ENCODE measurements at regions of chr2 and their contacts with region 1.

Region 1: DNA sequence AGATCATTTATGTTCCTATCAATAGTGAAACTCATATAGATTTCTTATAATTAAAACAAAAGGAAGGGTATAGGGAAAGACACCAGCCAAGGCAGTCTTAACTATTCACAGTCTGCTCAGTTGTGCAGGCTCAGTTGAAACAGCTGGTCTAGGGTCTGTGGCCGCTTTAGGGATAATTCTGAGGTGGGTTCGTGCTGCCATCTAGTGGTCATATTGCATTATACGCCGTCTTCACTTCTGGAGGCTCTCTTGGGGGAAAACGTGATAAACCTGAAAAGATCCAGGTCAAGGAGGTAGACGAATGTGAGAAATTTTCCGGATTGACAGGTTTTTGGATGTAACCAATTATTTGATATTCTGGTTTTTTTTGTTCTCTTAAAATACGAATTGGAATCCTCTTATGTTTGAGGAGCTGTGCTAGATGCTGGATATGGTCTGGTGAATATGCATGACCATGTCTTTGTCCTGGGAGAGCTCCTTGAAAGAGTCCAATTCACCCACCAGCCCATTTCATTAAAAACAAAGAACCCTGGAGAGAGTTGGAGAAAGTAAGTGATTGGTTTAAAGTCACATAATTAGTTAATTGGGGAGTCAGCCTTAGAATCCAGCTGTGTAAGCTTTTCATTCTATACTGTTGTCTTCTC is 492.4 kb downstream of the PLCL1 start:
- DNase-seq: peak; percentile 48 to 57 (median 55)
- H3K4me3 ChIP-seq: no peak overlapping the region
- H3K4me3 Mint-ChIP-seq: no peak overlapping the region
- H3K27ac ChIP-seq: no peak overlapping the region
- H3K27ac Mint-ChIP-seq: no peak overlapping the region
- H3K4me1 ChIP-seq: no peaks in the 10 kb centered on the region
- H3K4me1 Mint-ChIP-seq: peaks cover 0 to 2% (median under 1%) of the 10 kb centered on the region in 4 donors
- H3K27me3 ChIP-seq: peaks cover 3% of the 10 kb centered on the region
- H3K27me3 Mint-ChIP-seq: peaks cover 7 to 19% of the 10 kb centered on the region in 2 donors

Region 2: DNA sequence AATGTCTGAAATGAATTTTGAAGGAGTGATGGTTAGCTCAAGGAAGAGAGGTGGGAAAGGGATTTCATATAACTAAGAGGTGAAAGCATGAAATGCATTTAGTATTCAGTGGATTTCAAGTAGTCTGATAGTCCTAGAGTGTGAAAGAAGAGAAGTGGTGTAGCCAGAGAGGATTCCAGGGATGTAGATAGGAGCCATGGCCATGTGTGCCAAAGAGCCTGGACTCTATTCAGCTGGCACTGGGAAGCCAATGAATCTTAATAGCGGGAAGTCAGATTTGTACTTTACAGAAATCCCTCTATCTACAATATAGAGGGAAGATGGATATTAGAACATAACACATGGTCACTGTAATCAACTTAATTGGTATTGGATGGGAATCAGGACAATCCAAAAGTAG is 503.3 kb before region 1 on chr2:
- CTCF ChIA-PET with region 1: interaction called, 30 read pairs
- POLR2A ChIA-PET with region 1: no interaction called
- intact Hi-C with region 1: no loop called
- DNase-seq: no peak
- H3K4me3 ChIP-seq: no peak overlapping the region
- H3K4me3 Mint-ChIP-seq: no peak overlapping the region
- H3K27ac ChIP-seq: no peak overlapping the region
- H3K27ac Mint-ChIP-seq: no peak overlapping the region
- H3K4me1 ChIP-seq: no peaks in the 10 kb centered on the region
- H3K4me1 Mint-ChIP-seq: no peaks in the 10 kb centered on the region
- H3K27me3 ChIP-seq: no peaks in the 10 kb centered on the region
- H3K27me3 Mint-ChIP-seq: peaks cover 19 to 26% of the 10 kb centered on the region in 2 donors

Region 3: GRCh38 chr2:197804049-197804757 is 492.6 kb before region 1 on chr2 and contains the start of gene PLCL1:
- CTCF ChIA-PET with region 1: interaction called, 30 read pairs
- POLR2A ChIA-PET with region 1: interaction called, 5 read pairs
- intact Hi-C with region 1: loop called (anchors 1 kb)
- DNase-seq: peak; percentile 89 to 92 (median 90)
- H3K4me3 ChIP-seq: peak within 1 kb of the TSS; percentile 60 to 82
- H3K4me3 Mint-ChIP-seq: peak within 1 kb of the TSS; percentile 92 to 97 (median 96)
- H3K27ac ChIP-seq: peak within 1 kb of the TSS; percentile 61
- H3K27ac Mint-ChIP-seq: peak within 1 kb of the TSS; percentile 77 to 94 (median 89)
- H3K4me1 ChIP-seq: peaks cover 50% of the 10 kb centered on the region
- H3K4me1 Mint-ChIP-seq: peaks cover 35 to 54% (median 45%) of the 10 kb centered on the region in 4 donors
- H3K27me3 ChIP-seq: no peaks in the 10 kb centered on the region
- H3K27me3 Mint-ChIP-seq: peaks cover 0 to 1% of the 10 kb centered on the region in 2 donors
- total RNA-seq, gene PLCL1: 16.9 to 17.6 TPM

Region 4: DNA sequence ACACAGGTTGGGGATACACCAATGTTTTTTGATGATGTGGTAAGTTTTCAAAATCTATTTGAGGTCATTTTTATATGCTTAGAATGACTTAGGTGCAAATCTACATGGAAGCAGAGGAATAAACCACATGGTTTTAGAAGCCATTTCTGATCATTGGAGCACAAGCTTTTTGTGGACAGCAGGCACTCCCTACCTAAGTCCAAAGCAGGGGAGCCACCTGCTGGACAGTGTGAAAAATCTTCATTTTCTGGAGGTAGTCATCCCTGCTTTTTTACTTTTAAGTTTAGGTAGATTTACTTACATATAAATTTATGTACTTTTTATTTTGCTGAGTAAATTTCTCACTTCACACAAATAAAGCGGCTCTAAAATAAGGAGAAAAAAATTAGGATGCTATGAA is 169.2 kb before region 1 on chr2:
- CTCF ChIA-PET with region 1: interaction called, 5 read pairs
- POLR2A ChIA-PET with region 1: no interaction called
- intact Hi-C with region 1: loop called (anchors 2 kb)
- DNase-seq: peak in 4 of 5 donors; percentile 37 to 49 (median 42)
- H3K4me3 ChIP-seq: no peak overlapping the region
- H3K4me3 Mint-ChIP-seq: no peak overlapping the region
- H3K27ac ChIP-seq: no peak overlapping the region
- H3K27ac Mint-ChIP-seq: no peak overlapping the region
- H3K4me1 ChIP-seq: no peaks in the 10 kb centered on the region
- H3K4me1 Mint-ChIP-seq: peaks cover 0 to 1% (median under 1%) of the 10 kb centered on the region in 4 donors
- H3K27me3 ChIP-seq: no peaks in the 10 kb centered on the region
- H3K27me3 Mint-ChIP-seq: peaks cover 0 to 1% of the 10 kb centered on the region in 2 donors

Region 5: GRCh38 chr2:198285216-198285615 is 11.6 kb before region 1 on chr2:
- CTCF ChIA-PET with region 1: interaction called, 13 read pairs
- POLR2A ChIA-PET with region 1: no interaction called
- intact Hi-C with region 1: no loop called
- DNase-seq: no peak
- H3K4me3 ChIP-seq: no peak overlapping the region
- H3K4me3 Mint-ChIP-seq: no peak overlapping the region
- H3K27ac ChIP-seq: no peak overlapping the region
- H3K27ac Mint-ChIP-seq: no peak overlapping the region
- H3K4me1 ChIP-seq: no peaks in the 10 kb centered on the region
- H3K4me1 Mint-ChIP-seq: peaks cover 0 to 4% (median 0%) of the 10 kb centered on the region in 4 donors
- H3K27me3 ChIP-seq: no peaks in the 10 kb centered on the region
- H3K27me3 Mint-ChIP-seq: peaks cover 16 to 21% of the 10 kb centered on the region in 2 donors

Region 6: GRCh38 chr2:198408171-198408570 is 111.4 kb after region 1 on chr2:
- CTCF ChIA-PET with region 1: no interaction called
- POLR2A ChIA-PET with region 1: no interaction called
- intact Hi-C with region 1: no loop called
- DNase-seq: no peak
- H3K4me3 ChIP-seq: no peak overlapping the region
- H3K4me3 Mint-ChIP-seq: no peak overlapping the region
- H3K27ac ChIP-seq: no peak overlapping the region
- H3K27ac Mint-ChIP-seq: no peak overlapping the region
- H3K4me1 ChIP-seq: no peaks in the 10 kb centered on the region
- H3K4me1 Mint-ChIP-seq: no peaks in the 10 kb centered on the region
- H3K27me3 ChIP-seq: no peaks in the 10 kb centered on the region
- H3K27me3 Mint-ChIP-seq: peaks cover 3 to 7% of the 10 kb centered on the region in 2 donors